ENCODE measurements at regions of chr7 and their contacts with region 1.

Region 1: GRCh38 chr7:111735661-111736551 is 173.6 kb upstream of the IMMP2L start:
- DNase-seq: peak in 2 of 5 donors; percentile 40 to 46
- ATAC-seq: peak; percentile 34 to 77 (median 56)
- H3K4me3 ChIP-seq: no peak overlapping the region
- H3K27ac ChIP-seq: no peak overlapping the region
- H3K4me1 ChIP-seq: peaks cover 0 to 18% (median 7%) of the 10 kb centered on the region in 12 donors
- H3K27me3 ChIP-seq: no peaks in the 10 kb centered on the region
- CTCF ChIP-seq: peak; percentile 81 to 94 (median 88)
- POLR2A ChIP-seq: no peak

Region 2: DNA sequence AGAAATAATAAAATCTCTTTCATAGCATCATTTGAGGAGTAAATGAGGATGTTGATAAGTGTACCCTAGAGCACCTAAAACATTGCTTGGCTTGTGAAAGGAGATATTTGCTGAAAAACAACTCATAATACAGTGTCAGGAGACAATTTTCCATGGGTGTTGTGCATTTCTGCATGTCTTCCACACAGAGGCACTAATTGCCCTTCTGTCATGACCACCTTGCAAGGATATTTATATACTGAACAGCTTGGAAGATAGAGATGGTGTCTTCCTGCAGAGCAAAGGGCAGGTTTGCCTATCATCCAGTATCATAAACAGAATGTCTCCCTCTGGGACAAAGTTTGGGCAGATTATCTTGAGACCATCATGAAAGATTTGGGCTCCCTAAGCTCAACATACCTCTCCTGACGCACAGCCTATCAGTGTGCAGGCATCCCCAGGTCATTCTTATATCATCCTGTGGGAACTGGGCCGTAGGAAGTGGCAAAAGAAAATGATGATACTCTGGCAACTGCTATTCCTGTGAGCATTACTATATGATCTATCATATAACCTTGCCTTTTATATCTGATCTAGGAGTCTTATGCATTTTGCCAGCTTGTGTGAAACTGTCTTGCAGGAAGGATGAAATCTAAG is 1140.1 kb before region 1 on chr7:
- intact Hi-C with region 1: loop called in 1 of 10 experiments (anchors 10 kb)
- DNase-seq: no peak
- ATAC-seq: peak in 1 of 4 donors; percentile 42
- H3K4me3 ChIP-seq: no peak overlapping the region
- H3K27ac ChIP-seq: no peak overlapping the region
- H3K4me1 ChIP-seq: no peaks in the 10 kb centered on the region
- H3K27me3 ChIP-seq: no peaks in the 10 kb centered on the region
- CTCF ChIP-seq: peak in 2 of 12 donors; percentile 12 to 14
- POLR2A ChIP-seq: no peak

Region 3: GRCh38 chr7:111098011-111098925 is 637.6 kb before region 1 on chr7:
- intact Hi-C with region 1: loop called in 8 of 10 experiments (anchors 5 to 10 kb)
- DNase-seq: peak in 4 of 5 donors; percentile 11 to 31 (median 23)
- ATAC-seq: peak in 2 of 4 donors; percentile 61 to 73
- H3K4me3 ChIP-seq: no peak overlapping the region
- H3K27ac ChIP-seq: no peak overlapping the region
- H3K4me1 ChIP-seq: peaks cover 0 to 8% (median 0%) of the 10 kb centered on the region in 12 donors
- H3K27me3 ChIP-seq: no peaks in the 10 kb centered on the region
- CTCF ChIP-seq: peak; percentile 42 to 79 (median 64)
- POLR2A ChIP-seq: no peak

Region 4: GRCh38 chr7:111486472-111487142 is 249.3 kb before region 1 on chr7:
- intact Hi-C with region 1: loop called in 4 of 10 experiments (anchors 10 kb)
- DNase-seq: no peak
- ATAC-seq: peak in 3 of 4 donors; percentile 55 to 63 (median 55)
- H3K4me3 ChIP-seq: no peak overlapping the region
- H3K27ac ChIP-seq: no peak overlapping the region
- H3K4me1 ChIP-seq: peaks cover 0 to 4% (median 0%) of the 10 kb centered on the region in 12 donors
- H3K27me3 ChIP-seq: no peaks in the 10 kb centered on the region
- CTCF ChIP-seq: peak; percentile 54 to 85 (median 72)
- POLR2A ChIP-seq: no peak

Region 5: GRCh38 chr7:111771638-111772037 is 35.7 kb after region 1 on chr7:
- intact Hi-C with region 1: no loop called
- DNase-seq: no peak
- ATAC-seq: no peak
- H3K4me3 ChIP-seq: no peak overlapping the region
- H3K27ac ChIP-seq: no peak overlapping the region
- H3K4me1 ChIP-seq: no peaks in the 10 kb centered on the region
- H3K27me3 ChIP-seq: no peaks in the 10 kb centered on the region
- CTCF ChIP-seq: no peak
- POLR2A ChIP-seq: no peak